ENCODE measurements at regions of chr20 and their contacts with region 1.

Region 1: GRCh38 chr20:62861726-62862336 is at the start of gene TCFL5:
- DNase-seq: peak; percentile 86
- total RNA-seq, gene TCFL5: 30.0 and 31.7 TPM in 2 replicates

Region 2: GRCh38 chr20:63009045-63009961 is 147.5 kb after region 1 on chr20:
- in situ Hi-C with region 1: loop called (anchors 25 kb)
- DNase-seq: peak; percentile 58

Measured in Caki2 (cell line).